SK-N-SH (cell line): ENCODE measurements at regions of chr5 and their contacts with region 1.

Region 1: GRCh38 chr5:62143268-62144229 is 162.5 kb upstream of the KIF2A start:
- DNase-seq: peak; percentile 24
- H3K4me3 ChIP-seq: no peak overlapping the region
- H3K27ac ChIP-seq: no peak overlapping the region
- H3K4me1 ChIP-seq: no peaks in the 10 kb centered on the region; a peak in 2 of 4 replicates
- H3K27me3 ChIP-seq: no peaks in the 10 kb centered on the region
- CTCF ChIP-seq: peak; percentile 82
- EP300 ChIP-seq: no peak
- RAD21 ChIP-seq: peak; percentile 72

Region 2: DNA sequence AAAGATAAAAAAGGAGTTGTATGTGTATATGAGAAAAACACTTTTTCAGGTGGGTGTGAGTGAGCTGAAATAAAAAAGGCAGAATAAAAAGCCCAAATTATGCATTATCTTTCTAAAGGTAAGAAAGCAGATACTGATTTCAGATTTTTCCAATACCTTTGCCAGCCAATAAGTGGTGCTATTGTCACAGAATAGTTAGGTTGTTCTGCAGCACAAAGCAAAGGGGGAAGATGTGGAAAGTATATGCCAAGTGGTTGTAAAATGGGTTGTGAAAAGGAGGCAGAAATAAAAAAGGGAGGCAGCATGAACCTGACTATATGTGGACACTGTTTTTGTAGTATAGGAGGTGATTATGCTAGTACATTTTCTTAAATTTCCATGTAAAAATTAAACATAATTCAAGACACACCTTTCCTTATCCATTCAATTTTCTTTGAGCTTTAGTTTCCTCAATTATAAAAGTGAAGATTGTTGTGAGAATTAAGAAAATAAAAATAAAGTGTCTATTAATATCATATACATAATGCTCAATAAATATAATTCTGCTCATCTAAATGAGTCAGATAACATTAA is 1088.0 kb before region 1 on chr5:
- CTCF ChIA-PET with region 1: interaction called, 11 read pairs
- POLR2A ChIA-PET with region 1: no interaction called
- DNase-seq: peak; percentile 41
- H3K4me3 ChIP-seq: no peak overlapping the region; a peak in 1 of 4 replicates
- H3K27ac ChIP-seq: no peak overlapping the region
- H3K4me1 ChIP-seq: peaks cover 0 to 17% of the 10 kb centered on the region in 2 experiments; a peak in 2 of 4 replicates
- H3K27me3 ChIP-seq: no peaks in the 10 kb centered on the region
- CTCF ChIP-seq: peak; percentile 71
- EP300 ChIP-seq: no peak
- RAD21 ChIP-seq: peak; percentile 90

Region 3: GRCh38 chr5:61933787-61934626 is 209.5 kb before region 1 on chr5:
- CTCF ChIA-PET with region 1: interaction called, 10 read pairs
- POLR2A ChIA-PET with region 1: no interaction called
- DNase-seq: peak; percentile 62
- H3K4me3 ChIP-seq: peak overlapping the region in 1 of 2 experiments; percentile 6; a peak in 2 of 4 replicates
- H3K27ac ChIP-seq: no peak overlapping the region
- H3K4me1 ChIP-seq: no peaks in the 10 kb centered on the region; a peak in 1 of 4 replicates
- H3K27me3 ChIP-seq: no peaks in the 10 kb centered on the region
- CTCF ChIP-seq: peak; percentile 65
- EP300 ChIP-seq: no peak
- RAD21 ChIP-seq: peak; percentile 94

Region 4: DNA sequence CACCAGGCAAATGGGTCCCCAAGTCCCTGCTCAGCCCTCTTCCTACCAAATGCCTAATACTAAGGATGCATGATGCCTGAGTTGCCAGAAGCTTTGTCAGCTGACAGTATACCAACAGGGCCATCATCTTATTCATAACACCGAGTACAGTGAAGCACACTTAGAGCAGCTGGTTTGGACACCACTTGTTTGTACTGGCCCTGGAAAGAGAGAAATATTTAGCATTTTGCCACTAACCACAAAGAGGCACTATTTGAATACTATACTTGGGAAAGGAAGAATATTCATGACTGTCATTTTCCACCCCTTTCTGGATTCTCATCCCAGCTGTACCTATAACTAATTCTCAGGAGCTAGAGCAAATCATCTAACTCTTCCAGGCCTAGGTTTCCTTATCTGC is 201.9 kb before region 1 on chr5:
- CTCF ChIA-PET with region 1: interaction called, 10 read pairs
- POLR2A ChIA-PET with region 1: no interaction called
- DNase-seq: no peak
- H3K4me3 ChIP-seq: no peak overlapping the region
- H3K27ac ChIP-seq: no peak overlapping the region
- H3K4me1 ChIP-seq: no peaks in the 10 kb centered on the region
- H3K27me3 ChIP-seq: no peaks in the 10 kb centered on the region
- CTCF ChIP-seq: no peak
- EP300 ChIP-seq: no peak
- RAD21 ChIP-seq: peak; percentile 44

Region 5: DNA sequence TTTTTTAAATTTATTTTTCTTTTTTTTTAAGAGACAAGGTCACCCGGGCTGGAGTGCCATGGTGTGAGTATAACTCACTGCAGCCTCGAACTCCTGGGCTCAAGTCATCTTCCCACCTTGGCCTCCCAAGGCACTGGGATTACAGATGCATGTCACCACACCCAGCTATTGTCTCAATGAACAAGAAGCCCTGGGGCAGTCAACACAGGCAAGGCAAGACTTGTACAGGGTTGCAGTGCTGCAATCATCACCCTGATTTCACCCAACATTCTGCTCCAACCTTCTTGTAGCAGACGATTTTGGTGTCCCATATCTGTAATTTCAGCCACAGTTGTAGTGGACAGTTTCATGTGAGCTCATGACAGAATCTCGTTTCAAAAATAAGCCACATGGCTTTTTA is 43.3 kb before region 1 on chr5:
- CTCF ChIA-PET with region 1: interaction called, 10 read pairs
- POLR2A ChIA-PET with region 1: no interaction called
- DNase-seq: no peak
- H3K4me3 ChIP-seq: no peak overlapping the region
- H3K27ac ChIP-seq: no peak overlapping the region
- H3K4me1 ChIP-seq: no peaks in the 10 kb centered on the region
- H3K27me3 ChIP-seq: no peaks in the 10 kb centered on the region
- CTCF ChIP-seq: no peak
- EP300 ChIP-seq: no peak
- RAD21 ChIP-seq: no peak

Region 6: GRCh38 chr5:62130100-62130499 is 13.4 kb before region 1 on chr5:
- CTCF ChIA-PET with region 1: interaction called, 12 read pairs
- POLR2A ChIA-PET with region 1: no interaction called
- DNase-seq: no peak
- H3K4me3 ChIP-seq: no peak overlapping the region
- H3K27ac ChIP-seq: no peak overlapping the region
- H3K4me1 ChIP-seq: no peaks in the 10 kb centered on the region
- H3K27me3 ChIP-seq: no peaks in the 10 kb centered on the region
- CTCF ChIP-seq: no peak
- EP300 ChIP-seq: no peak
- RAD21 ChIP-seq: no peak

Region 7: GRCh38 chr5:62155988-62156387 is 12.4 kb after region 1 on chr5:
- CTCF ChIA-PET with region 1: interaction called, 11 read pairs
- POLR2A ChIA-PET with region 1: no interaction called
- DNase-seq: no peak
- H3K4me3 ChIP-seq: no peak overlapping the region
- H3K27ac ChIP-seq: no peak overlapping the region
- H3K4me1 ChIP-seq: peaks cover 0 to 2% of the 10 kb centered on the region in 2 experiments; a peak in 1 of 4 replicates
- H3K27me3 ChIP-seq: no peaks in the 10 kb centered on the region
- CTCF ChIP-seq: no peak
- EP300 ChIP-seq: no peak
- RAD21 ChIP-seq: no peak

Region 8: GRCh38 chr5:62376064-62376463 is 232.5 kb after region 1 on chr5:
- CTCF ChIA-PET with region 1: no interaction called
- POLR2A ChIA-PET with region 1: no interaction called
- DNase-seq: no peak
- H3K4me3 ChIP-seq: no peak overlapping the region
- H3K27ac ChIP-seq: no peak overlapping the region
- H3K4me1 ChIP-seq: peaks cover 0 to 8% of the 10 kb centered on the region in 2 experiments; a peak in 1 of 4 replicates
- H3K27me3 ChIP-seq: no peaks in the 10 kb centered on the region
- CTCF ChIP-seq: no peak
- EP300 ChIP-seq: no peak
- RAD21 ChIP-seq: no peak